SK-N-SH (cell line): ENCODE measurements at regions of chr11 and their contacts with region 1.

Region 1: GRCh38 chr11:124586238-124586860 is 16.6 kb downstream of the OR8A1 start:
- DNase-seq: peak; percentile 32
- H3K4me3 ChIP-seq: no peak overlapping the region
- H3K27ac ChIP-seq: no peak overlapping the region
- H3K4me1 ChIP-seq: no peaks in the 10 kb centered on the region
- H3K27me3 ChIP-seq: peaks cover 42% of the 10 kb centered on the region; the same call in 1 of the 2 replicates
- CTCF ChIP-seq: peak; percentile 71
- EP300 ChIP-seq: no peak
- RAD21 ChIP-seq: peak; percentile 67

Region 2: GRCh38 chr11:124402326-124402922 is 183.9 kb before region 1 on chr11:
- CTCF ChIA-PET with region 1: interaction called, 27 read pairs
- POLR2A ChIA-PET with region 1: no interaction called
- DNase-seq: peak; percentile 64
- H3K4me3 ChIP-seq: no peak overlapping the region
- H3K27ac ChIP-seq: no peak overlapping the region
- H3K4me1 ChIP-seq: no peaks in the 10 kb centered on the region; a peak in 1 of 4 replicates
- H3K27me3 ChIP-seq: peaks cover 5% of the 10 kb centered on the region; the same call in 1 of the 2 replicates
- CTCF ChIP-seq: peak; percentile 84
- EP300 ChIP-seq: no peak
- RAD21 ChIP-seq: peak; percentile 78

Region 3: GRCh38 chr11:124415356-124415923 is 170.9 kb before region 1 on chr11:
- CTCF ChIA-PET with region 1: interaction called, 13 read pairs
- POLR2A ChIA-PET with region 1: no interaction called
- DNase-seq: no peak
- H3K4me3 ChIP-seq: no peak overlapping the region
- H3K27ac ChIP-seq: no peak overlapping the region
- H3K4me1 ChIP-seq: no peaks in the 10 kb centered on the region
- H3K27me3 ChIP-seq: peaks cover 9% of the 10 kb centered on the region; the same call in 1 of the 2 replicates
- CTCF ChIP-seq: peak; percentile 59
- EP300 ChIP-seq: no peak
- RAD21 ChIP-seq: peak; percentile 38; the same call in 1 of the 2 replicates

Region 4: DNA sequence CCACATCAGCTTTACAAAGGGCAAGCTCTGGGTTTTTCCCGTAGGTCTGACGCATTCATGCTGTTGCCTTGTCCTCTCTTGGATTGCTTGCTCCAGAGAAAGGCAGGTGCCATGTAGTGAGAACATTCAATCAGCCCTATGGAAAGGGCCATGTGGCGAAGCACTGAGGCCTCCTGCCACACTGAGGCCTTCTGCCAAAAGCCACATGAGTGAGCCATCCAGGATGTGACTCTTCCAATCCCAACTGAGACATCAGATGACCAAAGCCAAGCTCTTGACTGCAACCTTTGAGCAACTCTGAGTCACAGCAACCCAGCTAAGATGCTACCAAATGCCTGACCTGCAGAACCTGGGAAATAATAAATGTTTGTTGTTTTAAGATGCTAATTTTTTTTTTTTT is 15.8 kb after region 1 on chr11:
- CTCF ChIA-PET with region 1: interaction called, 12 read pairs
- POLR2A ChIA-PET with region 1: no interaction called
- DNase-seq: no peak
- H3K4me3 ChIP-seq: no peak overlapping the region
- H3K27ac ChIP-seq: no peak overlapping the region
- H3K4me1 ChIP-seq: peaks cover 0 to 5% of the 10 kb centered on the region in 2 experiments; a peak in 1 of 4 replicates
- H3K27me3 ChIP-seq: peaks cover 4% of the 10 kb centered on the region; the same call in 1 of the 2 replicates
- CTCF ChIP-seq: no peak
- EP300 ChIP-seq: no peak
- RAD21 ChIP-seq: no peak

Region 5: GRCh38 chr11:124673333-124674167 is 87.2 kb after region 1 on chr11 and contains the starts of genes SIAE and SPA17:
- CTCF ChIA-PET with region 1: no interaction called
- POLR2A ChIA-PET with region 1: no interaction called
- DNase-seq: peak; percentile 97
- H3K4me3 ChIP-seq: peak within 1 kb of the TSS; percentile 87 to 89
- H3K27ac ChIP-seq: peak within 1 kb of the TSS; percentile 87 to 88
- H3K4me1 ChIP-seq: peaks cover 0 to 11% of the 10 kb centered on the region in 2 experiments; a peak in 1 of 4 replicates
- H3K27me3 ChIP-seq: no peaks in the 10 kb centered on the region
- CTCF ChIP-seq: no peak
- EP300 ChIP-seq: peak in 1 of 2 experiments; percentile 48; a peak in 1 of 4 replicates
- RAD21 ChIP-seq: no peak
- polyA plus RNA-seq, gene SIAE: 27.9 and 47.0 TPM in 2 replicates
- polyA plus RNA-seq, gene SPA17: 7.7 and 11.7 TPM in 2 replicates

Region 6: GRCh38 chr11:124746621-124747243 is 160.4 kb after region 1 on chr11:
- CTCF ChIA-PET with region 1: no interaction called
- POLR2A ChIA-PET with region 1: no interaction called
- DNase-seq: peak; percentile 74
- H3K4me3 ChIP-seq: peak overlapping the region in 1 of 2 experiments; percentile 3; a peak in 1 of 4 replicates
- H3K27ac ChIP-seq: no peak overlapping the region
- H3K4me1 ChIP-seq: no peaks in the 10 kb centered on the region
- H3K27me3 ChIP-seq: no peaks in the 10 kb centered on the region
- CTCF ChIP-seq: no peak
- EP300 ChIP-seq: no peak
- RAD21 ChIP-seq: no peak